PC-9 (cell line): ENCODE measurements at regions of chrX and their contacts with region 1.

Region 1: GRCh38 chrX:150269605-150270254 is 93.4 kb upstream of the MAMLD1 start:
- DNase-seq: no peak
- H3K4me3 ChIP-seq: no peak overlapping the region
- H3K27ac ChIP-seq: no peak overlapping the region
- H3K4me1 ChIP-seq: no peaks in the 10 kb centered on the region
- H3K27me3 ChIP-seq: no peaks in the 10 kb centered on the region
- CTCF ChIP-seq: no peak

Region 2: GRCh38 chrX:150288210-150288609 is 18.5 kb after region 1 on chrX:
- CTCF ChIA-PET with region 1: no interaction called
- POLR2A ChIA-PET with region 1: no interaction called
- intact Hi-C with region 1: loop called (anchors 2 kb)
- DNase-seq: no peak
- H3K4me3 ChIP-seq: no peak overlapping the region
- H3K27ac ChIP-seq: no peak overlapping the region
- H3K4me1 ChIP-seq: peaks cover 13% of the 10 kb centered on the region
- H3K27me3 ChIP-seq: no peaks in the 10 kb centered on the region
- CTCF ChIP-seq: no peak